ENCODE measurements at regions of chr12 and their contacts with region 1.

Region 1: DNA sequence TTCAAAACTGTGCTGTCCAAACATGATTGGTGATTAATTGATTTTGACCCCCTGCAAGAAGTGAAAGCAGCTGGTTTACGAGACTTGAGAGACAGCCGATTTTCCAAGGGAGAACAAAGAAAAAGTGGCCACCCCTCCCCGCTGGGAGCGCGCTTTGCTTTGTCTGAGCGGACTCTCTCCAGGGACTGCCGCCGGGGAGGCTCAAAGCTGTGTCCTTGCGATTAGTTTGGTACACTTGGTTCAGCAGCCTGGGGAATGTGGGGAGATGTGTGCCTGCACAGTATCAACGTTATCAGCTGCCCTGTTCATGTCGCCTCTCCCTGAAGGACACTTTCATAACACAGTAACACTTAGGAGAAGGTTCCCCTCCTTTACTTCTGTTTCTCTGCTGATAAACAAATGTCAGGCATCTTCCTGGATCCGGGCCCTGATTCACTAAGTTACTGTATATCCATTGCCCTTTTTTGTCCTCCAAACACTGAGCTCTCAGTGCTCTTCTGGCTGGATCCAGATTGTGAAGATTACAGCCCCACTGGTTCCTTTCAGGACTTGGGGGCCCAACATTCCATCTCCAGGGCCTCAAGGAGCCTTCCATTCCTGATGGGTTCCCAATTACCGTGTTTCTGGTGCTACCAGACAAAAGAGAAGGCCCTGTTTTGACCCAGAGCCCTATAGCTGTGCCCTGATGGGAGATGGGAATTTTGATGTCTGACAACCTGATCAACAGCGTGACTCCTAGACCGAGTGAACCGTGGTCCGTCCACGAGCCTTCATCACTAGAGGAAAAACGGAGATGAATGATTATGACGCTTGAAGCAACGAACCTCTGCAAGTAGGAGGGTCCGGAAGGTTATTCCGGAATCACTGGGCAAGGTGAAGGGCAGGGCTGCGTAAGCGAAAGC is 31.7 kb upstream of the TUBA1C start:
- DNase-seq: peak; percentile 71 to 82
- ATAC-seq: no peak
- H3K4me3 ChIP-seq: peak overlapping the region in 1 of 2 donors; percentile 38
- H3K27ac ChIP-seq: peak overlapping the region in 1 of 2 donors; percentile 91
- H3K4me1 ChIP-seq: peaks cover 0 to 4% of the 10 kb centered on the region in 2 donors
- H3K27me3 ChIP-seq: no peaks in the 10 kb centered on the region

Region 2: DNA sequence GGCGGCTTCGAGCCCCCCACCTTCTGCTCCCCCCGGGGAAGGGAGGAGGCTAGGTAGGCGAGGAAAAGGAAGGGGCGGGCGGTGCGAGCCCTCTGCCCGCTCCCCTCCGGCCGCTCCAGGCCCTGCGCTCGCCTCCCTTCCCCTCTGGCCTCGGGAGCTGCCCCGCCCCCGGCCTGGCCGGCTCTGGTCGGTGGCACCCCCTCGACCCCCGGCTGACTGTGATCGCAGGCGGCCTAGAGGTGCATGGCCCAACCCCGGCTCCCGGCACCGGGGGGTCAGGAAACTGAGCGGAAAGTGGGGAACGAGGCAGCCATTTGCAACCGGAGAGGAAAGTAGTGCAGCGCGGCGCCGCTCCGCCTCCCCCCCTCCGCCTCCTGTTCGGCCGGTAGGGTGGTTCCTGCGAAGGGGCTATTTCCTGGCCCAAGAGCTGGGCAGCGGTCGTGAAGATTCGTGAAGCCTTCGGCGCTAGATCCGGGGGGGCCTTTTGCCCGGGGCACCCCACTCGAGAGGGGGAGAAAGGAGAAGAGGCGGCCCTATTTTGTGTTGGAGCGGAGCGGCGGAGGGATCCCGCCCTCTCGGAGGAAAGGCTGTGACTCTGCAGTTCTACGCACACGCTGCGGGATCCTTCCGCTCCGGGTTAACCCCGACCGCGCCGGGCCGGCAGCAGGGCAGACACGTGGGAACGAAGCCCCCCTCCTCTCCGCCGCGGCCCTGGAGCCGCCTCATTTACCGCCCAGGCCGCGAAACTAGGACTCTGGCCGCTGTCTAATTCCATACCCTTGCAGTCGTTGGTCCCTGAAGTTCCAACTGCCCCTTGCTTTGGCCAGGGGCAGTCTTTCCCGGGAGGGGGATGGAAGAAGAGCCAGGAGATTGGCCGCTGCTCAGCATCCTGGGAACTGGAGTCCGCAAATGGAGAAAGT is 172.7 kb before region 1 on chr12 and contains the start of gene KMT2D:
- intact Hi-C with region 1: loop called in 1 of 2 experiments (anchors 5 kb)
- DNase-seq: peak; percentile 96 to 97
- ATAC-seq: peak; percentile 95
- H3K4me3 ChIP-seq: peak within 1 kb of the TSS; percentile 88 to 92
- H3K27ac ChIP-seq: peak within 1 kb of the TSS; percentile 84 to 86
- H3K4me1 ChIP-seq: no peaks in the 10 kb centered on the region
- H3K27me3 ChIP-seq: no peaks in the 10 kb centered on the region
- total RNA-seq, gene KMT2D: 88.6 to 97.4 TPM

Region 3: DNA sequence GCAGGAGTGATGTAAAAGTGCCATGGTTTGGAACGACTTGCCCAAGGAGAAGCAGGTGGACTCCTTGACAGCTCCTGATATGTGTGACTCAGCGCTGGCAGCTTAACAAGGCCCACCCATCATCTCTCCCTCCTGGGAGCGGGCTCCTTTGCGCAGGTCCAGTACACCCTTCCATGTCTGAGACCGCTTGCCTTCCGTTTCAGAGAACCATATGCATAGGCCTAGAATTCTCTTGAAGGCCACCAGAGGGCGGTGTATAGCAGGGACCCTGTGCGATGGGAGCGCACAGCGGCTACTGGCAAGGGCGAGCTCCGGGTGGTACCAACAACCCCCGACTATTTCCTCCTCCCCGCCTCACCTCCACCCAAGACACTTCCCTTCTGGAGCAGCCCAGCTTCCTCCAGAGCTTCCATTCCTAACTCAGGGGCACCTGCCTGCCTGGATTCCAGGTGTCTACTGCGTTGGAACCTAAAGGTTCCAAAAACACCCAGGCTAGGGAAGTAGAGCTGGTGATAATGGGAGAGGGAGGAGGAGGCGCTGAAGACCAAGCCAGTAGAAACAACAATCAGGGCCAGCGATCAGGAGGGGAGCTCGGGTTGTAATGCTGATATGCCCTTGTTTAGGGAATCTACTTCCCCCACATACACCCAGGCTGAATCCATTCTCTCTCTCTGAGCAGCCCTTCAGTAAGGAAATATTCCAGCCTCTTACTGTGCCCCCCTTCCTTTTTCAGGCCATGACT is 144.8 kb before region 1 on chr12:
- intact Hi-C with region 1: loop called (anchors 1 to 10 kb)
- DNase-seq: peak; percentile 82 to 89
- ATAC-seq: peak; percentile 91
- H3K4me3 ChIP-seq: no peak overlapping the region
- H3K27ac ChIP-seq: no peak overlapping the region
- H3K4me1 ChIP-seq: no peaks in the 10 kb centered on the region
- H3K27me3 ChIP-seq: no peaks in the 10 kb centered on the region

Region 4: GRCh38 chr12:49188914-49189367 is 44.2 kb before region 1 on chr12 and contains the start of gene TUBA1A:
- intact Hi-C with region 1: loop called (anchors 2 to 5 kb)
- DNase-seq: peak; percentile 96 to 97
- ATAC-seq: peak; percentile 96
- H3K4me3 ChIP-seq: peak within 1 kb of the TSS; percentile 73 to 92
- H3K27ac ChIP-seq: peak within 1 kb of the TSS; percentile 80 to 91
- H3K4me1 ChIP-seq: no peaks in the 10 kb centered on the region
- H3K27me3 ChIP-seq: no peaks in the 10 kb centered on the region
- total RNA-seq, gene TUBA1A: 148 to 253 TPM

Region 5: DNA sequence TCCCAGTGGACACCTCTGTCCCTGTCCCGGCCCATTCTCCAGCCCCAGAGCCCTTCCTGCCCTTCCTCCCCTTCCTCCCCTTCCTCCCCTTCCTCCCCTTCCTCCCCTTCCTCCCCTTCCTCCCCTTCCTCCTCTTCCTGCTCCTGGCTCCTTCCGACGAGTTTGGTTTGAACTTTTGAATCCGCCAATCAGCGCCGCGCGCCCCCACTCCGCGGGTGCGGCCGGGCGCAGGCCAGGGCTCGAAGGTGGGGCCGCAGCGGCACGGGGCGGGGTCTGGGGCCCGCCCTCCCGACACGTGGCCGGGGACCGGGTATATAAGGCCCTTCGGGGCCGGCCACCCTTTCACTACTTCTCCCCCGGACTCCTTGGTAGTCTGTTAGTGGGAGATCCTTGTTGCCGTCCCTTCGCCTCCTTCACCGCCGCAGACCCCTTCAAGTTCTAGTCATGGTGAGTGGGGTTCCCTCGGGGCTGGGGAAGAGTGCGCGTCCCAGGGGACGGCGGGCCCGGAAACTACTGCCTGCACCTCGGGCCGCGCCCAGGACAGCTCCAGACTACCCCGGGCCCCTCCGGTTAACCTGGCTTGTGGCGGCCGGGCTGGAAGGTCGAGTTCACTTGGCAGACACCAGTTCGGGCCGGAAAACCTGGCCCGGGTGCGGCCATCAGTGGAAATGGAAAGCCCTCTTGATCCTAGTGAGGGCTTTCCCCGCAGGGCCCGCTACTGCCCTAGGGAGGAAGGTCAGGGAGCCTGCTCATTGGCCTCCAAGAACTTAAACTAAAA is 31.7 kb after region 1 on chr12 and contains the start of gene TUBA1C:
- intact Hi-C with region 1: loop called in 1 of 2 experiments (anchors 2 kb)
- DNase-seq: peak; percentile 97
- ATAC-seq: peak; percentile 98
- H3K4me3 ChIP-seq: peak within 1 kb of the TSS; percentile 63 to 95
- H3K27ac ChIP-seq: peak within 1 kb of the TSS; percentile 85 to 93
- H3K4me1 ChIP-seq: peaks cover 0 to 6% of the 10 kb centered on the region in 2 donors
- H3K27me3 ChIP-seq: no peaks in the 10 kb centered on the region
- total RNA-seq, gene TUBA1C: 89.2 to 181 TPM

Region 6: GRCh38 chr12:49945394-49946080 is 712.3 kb after region 1 on chr12:
- intact Hi-C with region 1: no loop called
- DNase-seq: peak; percentile 87 to 96
- ATAC-seq: peak; percentile 87
- H3K4me3 ChIP-seq: no peak overlapping the region
- H3K27ac ChIP-seq: no peak overlapping the region
- H3K4me1 ChIP-seq: no peaks in the 10 kb centered on the region
- H3K27me3 ChIP-seq: no peaks in the 10 kb centered on the region

Measured in aorta (tissue), 5 donors.